ENCODE measurements at regions of chr19 and their contacts with region 1.

Region 1: GRCh38 chr19:16446724-16447368 is 24.9 kb downstream of the EPS15L1 start:
- DNase-seq: peak; percentile 72 to 81
- ATAC-seq: peak; percentile 78 to 85 (median 80)
- H3K4me3 ChIP-seq: no peak overlapping the region
- H3K4me3 Mint-ChIP-seq: peak overlapping the region; percentile 91
- H3K27ac ChIP-seq: peak overlapping the region; percentile 88
- H3K27ac Mint-ChIP-seq: peak overlapping the region; percentile 96 to 97
- H3K4me1 ChIP-seq: peaks cover 91% of the 10 kb centered on the region
- H3K4me1 Mint-ChIP-seq: peaks cover 76 to 81% of the 10 kb centered on the region in 2 donors
- H3K27me3 ChIP-seq: no peaks in the 10 kb centered on the region
- H3K27me3 Mint-ChIP-seq: no peaks in the 10 kb centered on the region
- CTCF ChIP-seq: no peak

Region 2: GRCh38 chr19:16338470-16339360 is 108.1 kb before region 1 on chr19:
- intact Hi-C with region 1: loop called (anchors 5 kb)
- DNase-seq: peak; percentile 61 to 77
- ATAC-seq: peak; percentile 33 to 54 (median 51)
- H3K4me3 ChIP-seq: peak overlapping the region; percentile 8
- H3K4me3 Mint-ChIP-seq: peak overlapping the region; percentile 87
- H3K27ac ChIP-seq: peak overlapping the region; percentile 69
- H3K27ac Mint-ChIP-seq: peak overlapping the region; percentile 97 to 98
- H3K4me1 ChIP-seq: peaks cover 100% of the 10 kb centered on the region
- H3K4me1 Mint-ChIP-seq: peaks cover 79 to 87% of the 10 kb centered on the region in 2 donors
- H3K27me3 ChIP-seq: no peaks in the 10 kb centered on the region
- H3K27me3 Mint-ChIP-seq: no peaks in the 10 kb centered on the region
- CTCF ChIP-seq: no peak

Region 3: GRCh38 chr19:16473875-16474392 is 27.1 kb after region 1 on chr19:
- intact Hi-C with region 1: no loop called
- DNase-seq: no peak
- ATAC-seq: no peak
- H3K4me3 ChIP-seq: no peak overlapping the region
- H3K4me3 Mint-ChIP-seq: peak overlapping the region; percentile 40
- H3K27ac ChIP-seq: no peak overlapping the region
- H3K27ac Mint-ChIP-seq: no peak overlapping the region
- H3K4me1 ChIP-seq: peaks cover 25% of the 10 kb centered on the region
- H3K4me1 Mint-ChIP-seq: peaks cover 20% of the 10 kb centered on the region in 2 donors
- H3K27me3 ChIP-seq: no peaks in the 10 kb centered on the region
- H3K27me3 Mint-ChIP-seq: no peaks in the 10 kb centered on the region
- CTCF ChIP-seq: no peak

Region 4: DNA sequence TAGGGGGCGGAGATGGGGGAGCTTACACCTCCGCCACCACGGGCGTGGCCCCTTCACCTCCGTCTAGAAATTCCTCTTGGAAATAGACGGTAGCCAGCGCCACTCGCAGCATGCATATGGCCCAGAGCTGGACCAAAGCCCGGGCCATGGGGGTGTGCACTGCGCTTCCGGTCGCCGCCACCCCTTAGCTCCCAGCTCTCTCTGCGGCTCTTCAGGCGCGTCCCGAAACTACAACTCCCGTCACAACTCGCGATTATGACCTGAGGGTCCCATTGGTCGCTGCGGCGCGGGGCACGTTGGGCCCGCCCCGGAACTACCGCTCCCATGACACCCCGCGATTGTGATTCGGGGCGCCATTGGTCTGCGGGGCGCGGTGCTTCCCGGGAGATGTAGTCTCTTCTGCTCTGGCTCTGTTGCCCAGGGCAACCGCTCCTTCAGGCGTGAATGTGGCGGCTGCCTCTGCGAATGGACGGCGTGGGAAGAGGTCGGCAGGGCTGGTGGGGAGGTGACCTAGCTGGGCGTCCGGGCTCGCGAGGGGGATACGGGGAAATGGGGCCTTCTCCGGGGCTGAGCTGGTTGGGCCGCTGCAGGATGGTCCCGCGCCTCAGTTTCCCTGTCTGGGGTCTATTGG is 49.3 kb after region 1 on chr19 and contains the starts of genes C19orf44 and CALR3:
- intact Hi-C with region 1: loop called (anchors 1 kb)
- DNase-seq: peak; percentile 95 to 98
- ATAC-seq: peak; percentile 98 to 100 (median 98)
- H3K4me3 ChIP-seq: peak within 1 kb of the TSS; percentile 61
- H3K4me3 Mint-ChIP-seq: peak within 1 kb of the TSS; percentile 98
- H3K27ac ChIP-seq: peak within 1 kb of the TSS; percentile 55
- H3K27ac Mint-ChIP-seq: peak within 1 kb of the TSS; percentile 91 to 95
- H3K4me1 ChIP-seq: peaks cover 16% of the 10 kb centered on the region
- H3K4me1 Mint-ChIP-seq: peaks cover 9 to 12% of the 10 kb centered on the region in 2 donors
- H3K27me3 ChIP-seq: no peaks in the 10 kb centered on the region
- H3K27me3 Mint-ChIP-seq: no peaks in the 10 kb centered on the region
- CTCF ChIP-seq: no peak
- total RNA-seq, gene C19orf44: 1.2 to 2.8 (median 1.4) TPM
- total RNA-seq, gene CALR3: not detected

Region 5: GRCh38 chr19:16659831-16660708 is 213.2 kb after region 1 on chr19 and contains the start of gene SMIM7:
- intact Hi-C with region 1: no loop called
- DNase-seq: peak; percentile 97 to 99
- ATAC-seq: peak; percentile 93 to 99 (median 96)
- H3K4me3 ChIP-seq: peak within 1 kb of the TSS; percentile 84
- H3K4me3 Mint-ChIP-seq: peak within 1 kb of the TSS; percentile 97
- H3K27ac ChIP-seq: peak within 1 kb of the TSS; percentile 78
- H3K27ac Mint-ChIP-seq: peak within 1 kb of the TSS; percentile 96 to 97
- H3K4me1 ChIP-seq: peaks cover 35% of the 10 kb centered on the region
- H3K4me1 Mint-ChIP-seq: peaks cover 24 to 34% of the 10 kb centered on the region in 2 donors
- H3K27me3 ChIP-seq: no peaks in the 10 kb centered on the region
- H3K27me3 Mint-ChIP-seq: no peaks in the 10 kb centered on the region
- CTCF ChIP-seq: no peak
- total RNA-seq, gene SMIM7: 63.2 to 88.4 (median 76.0) TPM

Measured in natural killer cell (primary cell).